ENCODE measurements at regions of chr19 and their contacts with region 1.

Region 1: DNA sequence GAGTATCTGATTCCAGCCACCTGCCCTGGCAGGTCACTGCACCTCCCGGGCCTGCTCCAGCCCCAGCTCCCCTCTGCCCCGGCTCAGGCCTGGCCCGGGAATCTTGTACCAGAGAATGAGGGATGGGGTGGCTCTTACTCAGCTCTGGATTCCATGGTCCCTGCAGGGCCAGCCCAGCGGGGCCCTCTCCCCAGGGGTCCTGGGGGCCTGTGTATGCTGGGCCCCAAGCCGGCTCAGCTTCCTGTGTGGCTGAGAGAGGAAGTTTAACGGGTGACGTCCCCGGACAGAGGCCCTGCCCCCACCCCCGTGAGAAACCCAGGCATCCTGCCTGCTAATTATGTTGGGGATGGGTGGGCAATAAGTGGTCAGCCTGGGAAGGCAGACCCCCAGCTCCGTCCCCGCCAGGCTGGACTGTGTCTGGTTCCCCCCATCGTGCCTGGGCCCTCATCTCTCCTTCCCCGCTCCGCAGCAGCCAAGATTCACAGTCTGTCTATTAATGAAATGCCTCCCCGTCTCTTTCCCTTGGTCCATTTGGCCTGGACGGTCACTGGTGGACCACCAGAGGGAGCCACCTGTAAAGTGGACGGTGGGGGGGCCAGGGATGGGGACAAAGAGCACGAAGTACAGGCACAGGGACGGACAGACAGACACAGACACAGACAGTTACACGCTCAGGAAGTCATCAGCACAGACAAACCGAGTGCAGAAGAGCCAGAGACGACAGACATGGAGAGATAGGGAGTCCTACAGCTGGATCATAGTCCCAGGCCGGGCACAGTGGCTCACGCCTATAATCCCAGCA is at the start of gene DENND1C:
- DNase-seq: peak; percentile 71
- H3K4me3 ChIP-seq: no peak within 1 kb of the TSS
- H3K27ac ChIP-seq: no peak within 1 kb of the TSS
- H3K4me1 ChIP-seq: peaks cover 0 to 5% of the 10 kb centered on the region in 2 experiments; a peak in 1 of 4 replicates
- H3K27me3 ChIP-seq: no peaks in the 10 kb centered on the region; the same call in 1 of the 2 replicates
- CTCF ChIP-seq: peak; percentile 60
- EP300 ChIP-seq: no peak
- RAD21 ChIP-seq: peak; percentile 40; the same call in 1 of the 2 replicates
- polyA plus RNA-seq, gene DENND1C: 0.05 and 0.11 TPM in 2 replicates

Region 2: GRCh38 chr19:6491802-6492592 is 10.3 kb after region 1 on chr19:
- CTCF ChIA-PET with region 1: interaction called, 14 read pairs
- POLR2A ChIA-PET with region 1: no interaction called
- DNase-seq: no peak
- H3K4me3 ChIP-seq: no peak overlapping the region
- H3K27ac ChIP-seq: no peak overlapping the region
- H3K4me1 ChIP-seq: no peaks in the 10 kb centered on the region; a peak in 1 of 4 replicates
- H3K27me3 ChIP-seq: no peaks in the 10 kb centered on the region
- CTCF ChIP-seq: no peak
- EP300 ChIP-seq: no peak
- RAD21 ChIP-seq: no peak